Mucosa of descending colon (tissue), 3 donors: ENCODE measurements at regions of chrX and their contacts with region 1.

Region 1: DNA sequence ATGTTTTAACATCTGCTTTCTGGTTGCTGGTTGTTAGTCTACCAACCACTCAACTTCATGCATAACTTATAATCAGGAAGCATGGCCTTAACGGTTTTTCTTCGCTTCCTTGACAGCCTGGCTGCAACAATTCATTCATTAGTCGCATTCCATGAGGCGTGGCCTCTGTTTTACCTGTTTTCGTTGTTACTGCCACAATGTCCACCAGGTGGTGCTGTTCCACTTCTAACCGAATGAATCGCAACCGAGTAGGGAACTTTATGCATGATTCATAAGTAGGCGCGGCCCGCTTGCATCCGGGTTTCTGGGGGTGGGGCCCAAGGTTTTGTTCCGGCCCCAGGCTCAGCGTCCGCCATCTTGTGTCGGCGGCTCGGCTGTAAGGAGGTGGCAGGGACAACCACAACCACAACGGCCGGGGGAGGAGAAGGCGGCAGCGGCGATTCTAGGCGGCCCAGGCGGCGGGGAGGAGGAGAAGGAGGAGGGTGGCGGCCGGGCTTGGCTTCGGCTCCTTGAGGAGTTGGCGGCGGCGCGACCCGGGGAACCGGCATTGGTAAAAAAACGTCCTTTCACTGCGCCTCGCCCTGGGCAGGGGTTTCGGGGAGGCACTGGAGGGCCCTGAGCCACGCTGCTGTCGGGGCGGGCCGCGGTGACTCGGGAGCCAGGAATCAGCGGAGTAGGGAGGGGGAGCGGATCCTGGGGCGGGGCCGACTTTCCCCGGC is at the start of gene UBA1:
- DNase-seq: peak; percentile 90 to 97 (median 96)
- ATAC-seq: peak; percentile 93
- H3K4me3 ChIP-seq: peak within 1 kb of the TSS; percentile 65
- H3K4me1 ChIP-seq: peaks cover 21% of the 10 kb centered on the region
- CTCF ChIP-seq: peak; percentile 40
- total RNA-seq, gene UBA1: 160 to 198 (median 172) TPM

Region 2: DNA sequence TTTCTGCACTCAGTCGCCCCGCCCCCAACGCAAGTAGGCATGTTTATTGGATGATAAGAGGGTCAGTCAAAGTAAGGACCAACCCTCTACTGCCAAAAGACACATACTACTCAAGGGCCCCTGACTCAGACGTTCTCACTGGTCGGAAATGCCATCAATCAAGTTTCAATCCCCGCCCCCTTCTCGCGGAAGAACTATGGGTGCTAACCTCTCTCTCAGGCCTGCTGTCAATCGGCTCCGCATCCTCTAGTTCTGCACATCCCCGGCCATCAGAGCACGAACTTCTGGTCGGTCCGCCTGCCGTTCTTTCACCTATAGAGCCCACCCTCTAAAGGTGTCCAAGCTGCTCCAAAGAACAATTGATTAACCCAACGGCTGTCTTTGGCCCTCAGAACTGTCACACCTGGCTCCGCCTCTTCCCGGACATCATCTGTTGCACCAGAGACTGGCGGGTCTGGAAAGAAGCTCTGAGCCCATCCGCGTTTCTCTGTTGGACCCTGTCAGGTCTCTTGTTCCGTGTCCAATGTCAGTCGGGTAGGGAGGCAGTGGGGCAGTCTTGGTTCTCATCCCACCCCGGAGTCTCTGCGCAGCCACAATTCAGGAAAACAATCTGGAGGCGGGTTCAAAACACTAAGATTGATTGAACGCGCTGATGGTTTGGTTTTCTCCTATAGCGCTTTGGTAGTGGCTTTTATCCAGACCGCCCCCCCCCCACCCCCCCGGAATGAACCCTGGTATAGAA is 64.3 kb before region 1 on chrX:
- intact Hi-C with region 1: no loop called
- DNase-seq: peak; percentile 89 to 94 (median 90)
- ATAC-seq: peak; percentile 99
- H3K4me3 ChIP-seq: peak overlapping the region; percentile 22
- H3K4me1 ChIP-seq: no peaks in the 10 kb centered on the region
- CTCF ChIP-seq: no peak

Region 3: DNA sequence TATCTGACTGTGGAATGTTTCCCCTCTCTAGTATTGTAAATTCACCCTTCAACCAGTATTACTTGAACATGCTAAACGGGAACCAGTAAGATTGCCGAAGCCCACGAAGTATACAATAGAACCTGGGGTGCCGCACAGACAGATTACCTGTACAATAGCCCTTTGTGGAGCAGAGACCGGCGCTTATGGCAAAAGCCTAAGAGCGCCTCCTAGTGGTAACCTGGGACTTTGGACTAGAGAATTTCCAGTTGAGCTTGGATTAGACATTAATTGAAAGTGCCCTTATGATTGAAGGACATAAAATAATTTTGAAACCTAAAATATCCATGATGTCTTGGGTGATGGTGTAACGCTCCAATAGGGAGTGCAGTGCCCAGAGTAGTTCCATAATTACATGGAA is 190.9 kb after region 1 on chrX:
- intact Hi-C with region 1: loop called in 1 of 2 experiments (anchors 10 kb)
- DNase-seq: peak in 2 of 3 donors; percentile 39 to 84
- ATAC-seq: peak; percentile 92
- H3K4me3 ChIP-seq: no peak overlapping the region
- H3K4me1 ChIP-seq: no peaks in the 10 kb centered on the region
- CTCF ChIP-seq: peak; percentile 30

Region 4: DNA sequence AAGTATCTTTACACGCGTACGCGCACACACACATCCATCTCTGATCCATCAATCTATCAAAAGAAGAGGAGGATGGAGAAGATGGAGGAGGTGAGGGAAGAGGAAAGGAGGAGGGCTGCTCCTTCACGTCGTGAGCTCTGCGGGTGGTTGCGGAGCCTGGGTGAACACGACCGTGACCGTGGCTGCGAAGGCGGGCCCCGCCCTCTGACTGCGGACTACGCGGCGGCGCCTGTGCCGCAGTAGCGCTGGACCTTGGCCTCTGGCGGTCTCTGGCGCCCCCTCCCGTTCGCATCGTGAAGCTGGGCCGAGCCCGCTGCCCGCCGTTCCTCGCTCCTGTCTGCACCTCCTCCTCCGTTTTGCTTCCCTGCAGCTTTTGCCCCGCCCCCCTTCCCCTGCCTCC is 329.7 kb after region 1 on chrX:
- intact Hi-C with region 1: loop called in 1 of 2 experiments (anchors 10 kb)
- DNase-seq: peak; percentile 82 to 90 (median 87)
- ATAC-seq: peak; percentile 100
- H3K4me3 ChIP-seq: no peak overlapping the region
- H3K4me1 ChIP-seq: no peaks in the 10 kb centered on the region
- CTCF ChIP-seq: peak; percentile 37